Activated CD4-positive, alpha-beta T cell treated with anti-CD3 and anti-CD28 coated beads, Interleukin-2, amount 10 ng/mL, durations not matched to agents 24 days and 14 days (primary cell): ENCODE measurements at regions of chr6 and their contacts with region 1.

Region 1: DNA sequence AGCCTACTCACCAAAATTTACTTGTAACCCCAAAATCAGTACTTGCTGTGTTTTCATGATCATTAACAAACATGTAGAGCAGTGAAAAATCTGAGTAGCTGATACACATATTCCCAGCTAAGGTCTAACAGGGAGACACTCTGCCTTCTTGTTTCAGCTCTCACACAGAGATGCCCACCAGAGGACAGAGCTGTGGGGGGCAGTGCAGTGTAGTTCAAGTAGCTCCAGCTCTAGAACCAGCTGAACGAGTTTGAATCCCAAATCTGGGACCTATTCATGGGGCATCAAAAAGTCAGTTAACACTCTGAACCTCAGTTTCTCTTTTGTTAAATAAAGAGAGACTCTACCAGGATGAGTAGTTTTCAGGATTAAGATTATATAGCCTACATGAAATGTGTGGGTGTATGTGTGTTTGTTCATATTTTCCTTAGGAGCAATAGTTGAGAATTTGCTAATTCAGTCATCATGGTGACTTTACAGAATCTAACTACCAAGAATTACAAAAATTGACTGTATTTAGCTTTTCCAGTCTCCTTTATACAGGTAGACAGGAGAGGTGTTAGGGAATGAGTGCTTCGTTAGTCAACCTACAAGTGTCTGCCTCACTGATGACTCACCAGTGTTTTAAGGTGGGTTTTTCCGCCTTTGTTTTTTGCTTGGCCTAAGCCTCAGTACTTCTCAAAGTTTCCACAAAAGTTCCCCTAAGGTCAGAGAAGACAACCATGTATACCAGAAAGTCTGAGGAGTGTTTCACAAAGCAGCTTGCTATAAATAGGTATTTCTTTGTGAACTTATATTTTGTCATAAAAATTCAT is 164.0 kb upstream of the RUNX2 start:
- DNase-seq: peak; percentile 79
- H3K4me3 Mint-ChIP-seq: peak overlapping the region; percentile 58
- H3K27ac Mint-ChIP-seq: peak overlapping the region; percentile 92
- H3K4me1 Mint-ChIP-seq: peaks cover 38% of the 10 kb centered on the region
- H3K27me3 Mint-ChIP-seq: no peaks in the 10 kb centered on the region

Region 2: GRCh38 chr6:44655412-44656342 is 508.5 kb before region 1 on chr6:
- intact Hi-C with region 1: loop called (anchors 10 kb)
- DNase-seq: peak; percentile 92
- H3K4me3 Mint-ChIP-seq: peak overlapping the region; percentile 51
- H3K27ac Mint-ChIP-seq: peak overlapping the region; percentile 80
- H3K4me1 Mint-ChIP-seq: peaks cover 13% of the 10 kb centered on the region
- H3K27me3 Mint-ChIP-seq: peaks cover 2% of the 10 kb centered on the region

Region 3: DNA sequence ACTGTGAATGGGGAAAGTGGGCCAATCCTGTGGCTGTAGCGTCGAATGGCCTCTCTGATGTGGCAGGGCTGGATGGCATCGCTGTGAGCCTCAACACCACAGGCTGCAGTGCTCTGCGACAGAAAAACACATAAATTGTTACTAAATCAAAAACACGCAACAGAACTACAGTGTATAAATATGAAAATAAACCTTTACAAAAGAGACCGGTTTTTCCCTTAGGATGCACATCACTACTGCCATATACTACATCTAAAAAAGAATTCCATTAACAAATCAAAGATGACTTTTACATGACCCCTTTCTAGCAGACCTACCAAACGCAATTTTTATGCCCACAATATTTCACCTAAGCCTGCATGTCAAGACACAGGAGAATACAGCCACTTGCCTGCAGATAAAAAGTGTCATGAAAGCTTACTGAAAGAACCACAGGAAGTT is 231.5 kb before region 1 on chr6:
- intact Hi-C with region 1: loop called (anchors 2 kb)
- DNase-seq: peak; percentile 80
- H3K4me3 Mint-ChIP-seq: peak overlapping the region; percentile 89
- H3K27ac Mint-ChIP-seq: peak overlapping the region; percentile 96
- H3K4me1 Mint-ChIP-seq: peaks cover 42% of the 10 kb centered on the region
- H3K27me3 Mint-ChIP-seq: no peaks in the 10 kb centered on the region

Region 4: GRCh38 chr6:45009576-45009975 is 154.6 kb before region 1 on chr6:
- intact Hi-C with region 1: loop called (anchors 1 kb)
- DNase-seq: no peak
- H3K4me3 Mint-ChIP-seq: no peak overlapping the region
- H3K27ac Mint-ChIP-seq: peak overlapping the region; percentile 60
- H3K4me1 Mint-ChIP-seq: peaks cover 20% of the 10 kb centered on the region
- H3K27me3 Mint-ChIP-seq: no peaks in the 10 kb centered on the region

Region 5: DNA sequence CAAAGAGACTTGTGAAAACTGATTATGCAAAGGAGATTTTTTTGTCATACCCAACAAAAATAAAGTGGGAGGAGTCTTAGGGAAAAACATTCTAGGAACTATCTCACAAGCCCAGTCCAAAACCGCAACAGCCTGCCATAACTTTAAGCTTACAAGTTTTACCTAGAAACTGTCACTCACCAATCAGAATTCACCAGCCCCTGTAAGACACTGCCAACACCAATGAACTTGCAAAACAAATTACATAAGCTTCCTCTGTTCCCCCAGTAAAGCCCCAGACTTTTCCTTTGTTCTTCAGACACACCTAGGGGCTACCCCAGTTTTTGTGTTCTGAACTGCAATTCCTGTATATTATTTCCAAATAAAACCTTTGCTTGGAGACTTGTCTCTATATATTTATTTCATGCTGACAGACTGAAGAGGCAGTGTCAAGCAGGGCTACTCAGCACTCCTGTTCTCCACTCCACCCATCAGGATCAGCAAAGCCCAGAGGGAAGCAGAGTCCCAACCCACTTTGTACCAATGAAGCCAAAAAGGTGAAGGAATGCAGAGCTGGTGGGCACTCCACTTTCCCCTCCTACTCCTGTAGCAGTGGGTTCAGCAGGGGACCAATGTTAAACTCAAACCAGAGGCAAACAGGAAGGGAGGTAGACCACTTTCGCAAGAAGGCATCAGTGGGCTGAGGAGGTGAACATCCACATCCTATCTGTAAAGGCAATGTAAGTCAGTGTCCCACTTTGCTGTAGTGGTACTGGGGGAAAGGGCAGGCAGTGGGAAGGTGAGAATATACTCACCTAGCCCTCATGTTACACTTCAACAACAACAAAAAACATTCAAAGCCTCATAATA is 21.5 kb after region 1 on chr6:
- intact Hi-C with region 1: loop called (anchors 2 kb)
- DNase-seq: no peak
- H3K4me3 Mint-ChIP-seq: no peak overlapping the region
- H3K27ac Mint-ChIP-seq: peak overlapping the region; percentile 62
- H3K4me1 Mint-ChIP-seq: peaks cover 34% of the 10 kb centered on the region
- H3K27me3 Mint-ChIP-seq: no peaks in the 10 kb centered on the region

Region 6: DNA sequence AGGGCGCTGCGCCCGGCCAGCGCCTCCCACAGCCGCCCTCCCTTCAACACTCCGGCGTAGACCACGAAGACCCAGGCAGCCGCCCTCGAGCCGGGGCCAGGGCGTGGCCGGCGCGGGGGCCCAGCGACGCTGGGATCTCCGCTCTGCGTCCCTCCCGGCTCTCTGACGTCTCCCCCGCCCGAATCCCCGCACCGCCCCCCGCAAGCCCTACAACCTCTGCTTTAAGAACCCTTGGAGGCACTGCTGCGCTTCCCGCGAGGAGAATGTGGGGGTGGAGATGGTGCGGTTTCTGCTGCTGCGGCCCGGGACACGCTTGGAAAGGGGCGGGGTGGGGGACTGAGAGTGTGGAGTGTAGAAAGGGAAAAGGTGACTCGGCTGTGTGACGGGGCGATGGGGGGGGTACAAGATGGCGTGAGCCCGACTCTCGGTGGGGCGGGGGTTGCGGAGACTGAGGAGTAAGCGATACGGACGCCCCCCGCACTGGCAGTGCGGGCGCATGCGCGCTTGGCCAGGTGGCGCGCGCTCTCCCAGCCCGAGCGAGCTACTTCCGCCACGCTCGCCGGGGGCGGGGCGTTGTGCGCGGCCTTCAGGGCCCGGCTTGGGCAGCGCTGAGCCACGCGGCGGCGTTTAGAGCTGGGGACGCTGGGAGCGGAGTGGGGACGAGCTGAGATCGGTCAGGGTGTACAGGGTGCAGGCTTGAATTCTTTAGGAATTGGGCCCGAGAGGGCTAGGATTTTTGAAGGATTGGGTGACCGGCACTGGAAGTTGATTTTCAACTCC is 213.6 kb after region 1 on chr6 and contains the start of gene SUPT3H:
- intact Hi-C with region 1: loop called (anchors 1 kb)
- DNase-seq: peak; percentile 97
- H3K4me3 Mint-ChIP-seq: peak within 1 kb of the TSS; percentile 99
- H3K27ac Mint-ChIP-seq: peak within 1 kb of the TSS; percentile 100
- H3K4me1 Mint-ChIP-seq: peaks cover 25% of the 10 kb centered on the region
- H3K27me3 Mint-ChIP-seq: no peaks in the 10 kb centered on the region
- total RNA-seq, gene SUPT3H: 12.4 and 13.0 TPM in 2 replicates

Region 7: GRCh38 chr6:45801471-45802289 is 637.5 kb after region 1 on chr6:
- intact Hi-C with region 1: loop called (anchors 10 kb)
- DNase-seq: peak; percentile 78
- H3K4me3 Mint-ChIP-seq: peak overlapping the region; percentile 28
- H3K27ac Mint-ChIP-seq: peak overlapping the region; percentile 86
- H3K4me1 Mint-ChIP-seq: peaks cover 21% of the 10 kb centered on the region
- H3K27me3 Mint-ChIP-seq: no peaks in the 10 kb centered on the region